IMR-90 (cell line): ENCODE measurements at regions of chr2 and their contacts with region 1.

Region 1: DNA sequence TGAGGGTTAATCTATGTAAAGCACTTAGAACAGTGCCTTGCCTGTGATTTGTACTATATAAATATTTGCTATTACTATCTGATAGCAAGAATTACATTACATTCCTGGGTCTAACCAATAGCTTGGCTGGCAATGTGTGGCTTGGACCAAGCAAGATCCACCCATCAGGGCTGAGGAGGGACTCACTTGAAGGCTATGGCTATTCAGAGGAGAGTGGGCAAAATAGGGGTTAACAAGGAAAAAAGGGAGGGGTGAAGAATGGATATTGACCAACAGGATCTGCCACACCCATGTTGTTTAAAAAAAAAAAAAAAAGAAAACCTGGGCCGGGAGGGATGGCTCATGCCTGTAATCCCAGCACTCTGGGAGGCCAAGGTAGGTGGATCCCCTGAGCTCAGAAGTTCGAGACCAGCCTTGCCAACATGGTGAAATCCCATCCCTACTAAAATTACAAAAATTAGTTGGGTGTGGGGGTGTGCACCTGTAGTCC is 20.0 kb upstream of the TMBIM1 start:
- DNase-seq: no peak
- ATAC-seq: peak; percentile 87
- H3K4me3 ChIP-seq: no peak overlapping the region
- H3K27ac ChIP-seq: no peak overlapping the region
- H3K4me1 ChIP-seq: peaks cover 8% of the 10 kb centered on the region
- H3K27me3 ChIP-seq: no peaks in the 10 kb centered on the region
- CTCF ChIP-seq: no peak
- POLR2A ChIP-seq: no peak
- RAD21 ChIP-seq: no peak

Region 2: DNA sequence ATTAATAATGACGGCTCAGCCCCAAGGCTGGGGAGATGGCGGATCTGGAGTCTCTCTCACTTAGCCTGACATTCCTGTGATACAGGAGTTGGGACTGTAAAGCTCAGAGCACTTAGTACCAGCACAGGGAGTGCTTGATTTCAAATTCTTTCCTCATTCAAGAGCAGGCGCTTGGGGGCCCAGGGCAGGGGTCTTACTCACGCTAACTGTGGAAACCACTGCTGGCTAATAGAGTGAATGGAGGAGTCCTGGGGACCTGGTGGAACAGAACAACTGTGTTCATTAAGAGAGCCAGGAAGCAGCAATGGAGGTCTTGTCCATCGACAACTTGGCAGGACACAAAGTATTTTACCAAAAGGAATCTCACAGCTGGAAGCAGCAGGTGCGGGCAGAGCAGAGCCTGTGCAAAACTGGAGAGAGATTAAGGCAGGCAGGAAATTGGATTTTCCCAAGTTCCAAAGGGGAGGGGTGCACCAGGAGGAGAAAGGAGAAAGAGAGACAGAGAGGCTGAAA is 668.5 kb before region 1 on chr2:
- CTCF ChIA-PET with region 1: no interaction called
- POLR2A ChIA-PET with region 1: no interaction called
- dilution Hi-C with region 1: no loop called
- in situ Hi-C with region 1: no loop called
- intact Hi-C with region 1: no loop called
- DNase-seq: no peak
- ATAC-seq: no peak
- H3K4me3 ChIP-seq: no peak overlapping the region
- H3K27ac ChIP-seq: no peak overlapping the region
- H3K4me1 ChIP-seq: no peaks in the 10 kb centered on the region
- H3K27me3 ChIP-seq: no peaks in the 10 kb centered on the region
- CTCF ChIP-seq: no peak
- POLR2A ChIP-seq: no peak
- RAD21 ChIP-seq: no peak

Region 3: DNA sequence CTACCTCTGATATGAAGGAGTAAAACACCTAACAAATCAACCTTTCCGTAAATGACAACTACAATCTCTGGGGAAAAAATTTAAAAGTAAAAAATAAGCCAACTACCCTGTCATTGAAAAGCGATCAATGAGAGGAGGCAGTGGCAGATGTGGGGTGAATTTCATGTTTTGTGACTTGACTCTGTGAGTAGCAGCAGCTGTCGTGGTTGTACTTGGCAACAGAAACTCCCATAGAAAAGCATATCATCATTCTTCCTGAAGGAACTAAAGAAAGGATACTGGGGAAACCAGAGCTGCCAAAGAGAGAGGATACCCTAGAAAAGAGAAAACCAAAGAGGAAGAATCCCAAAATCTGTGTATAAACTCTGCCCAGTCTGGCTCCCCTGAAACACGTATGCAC is 546.0 kb before region 1 on chr2:
- CTCF ChIA-PET with region 1: no interaction called
- POLR2A ChIA-PET with region 1: no interaction called
- dilution Hi-C with region 1: no loop called
- in situ Hi-C with region 1: no loop called
- intact Hi-C with region 1: no loop called
- DNase-seq: no peak
- ATAC-seq: no peak
- H3K4me3 ChIP-seq: no peak overlapping the region
- H3K27ac ChIP-seq: no peak overlapping the region
- H3K4me1 ChIP-seq: no peaks in the 10 kb centered on the region
- H3K27me3 ChIP-seq: no peaks in the 10 kb centered on the region
- CTCF ChIP-seq: no peak
- POLR2A ChIP-seq: no peak
- RAD21 ChIP-seq: no peak

Region 4: DNA sequence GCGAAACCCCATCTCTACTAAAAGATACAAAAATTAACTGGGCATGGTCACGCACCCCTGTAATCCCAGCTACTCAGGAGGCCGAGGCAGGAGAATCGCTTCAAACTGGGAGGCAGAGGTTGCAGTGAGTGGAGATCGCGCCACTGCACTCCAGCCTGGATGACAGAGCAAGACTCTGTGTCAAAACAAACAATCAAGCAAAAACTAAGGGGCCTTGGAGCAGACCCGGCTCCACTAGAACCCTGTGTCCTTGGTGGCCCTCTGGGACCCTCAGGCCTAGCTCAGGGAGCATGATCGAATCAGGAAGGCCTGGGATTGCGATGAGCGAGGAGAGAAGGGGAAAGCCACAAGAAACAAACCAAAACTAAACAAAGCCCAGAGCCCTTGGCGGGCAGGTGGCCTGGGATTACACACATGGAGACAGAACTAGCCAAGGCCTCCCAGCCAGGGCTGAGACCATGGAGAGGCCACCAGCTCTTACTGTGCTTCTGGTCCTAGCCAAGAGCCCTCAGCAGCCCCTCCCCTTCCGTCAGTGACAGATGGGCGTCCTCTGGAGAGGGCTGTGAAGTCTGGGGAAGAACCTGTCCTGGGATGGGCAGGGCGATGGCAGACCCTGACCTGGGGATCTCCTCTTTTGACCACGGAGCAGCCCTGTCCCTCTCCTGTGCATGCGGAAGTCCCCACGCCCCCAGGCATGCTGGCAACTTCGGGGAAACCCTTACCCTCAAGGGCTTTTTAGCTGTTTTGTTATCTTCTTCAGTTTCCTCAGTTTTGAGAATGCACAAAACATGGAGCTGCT is 16.9 kb after region 1 on chr2:
- CTCF ChIA-PET with region 1: no interaction called
- POLR2A ChIA-PET with region 1: no interaction called
- dilution Hi-C with region 1: no loop called
- in situ Hi-C with region 1: no loop called
- intact Hi-C with region 1: no loop called
- DNase-seq: no peak
- ATAC-seq: no peak
- H3K4me3 ChIP-seq: no peak overlapping the region
- H3K27ac ChIP-seq: no peak overlapping the region
- H3K4me1 ChIP-seq: peaks cover 9% of the 10 kb centered on the region
- H3K27me3 ChIP-seq: no peaks in the 10 kb centered on the region
- CTCF ChIP-seq: no peak
- POLR2A ChIP-seq: no peak
- RAD21 ChIP-seq: no peak

Region 5: GRCh38 chr2:218354850-218355443 is 42.6 kb after region 1 on chr2:
- CTCF ChIA-PET with region 1: interaction called, 4 read pairs
- POLR2A ChIA-PET with region 1: interaction called, 4 read pairs
- dilution Hi-C with region 1: no loop called
- in situ Hi-C with region 1: loop called (anchors 5 kb)
- intact Hi-C with region 1: no loop called
- DNase-seq: no peak
- ATAC-seq: no peak
- H3K4me3 ChIP-seq: no peak overlapping the region
- H3K27ac ChIP-seq: no peak overlapping the region
- H3K4me1 ChIP-seq: peaks cover 2% of the 10 kb centered on the region; the same call in 1 of the 2 replicates
- H3K27me3 ChIP-seq: 0 out of 2 replicates have a peak, but pooled peaks cover 2% of the 10 kb centered on the region
- CTCF ChIP-seq: no peak
- POLR2A ChIP-seq: no peak
- RAD21 ChIP-seq: no peak

Region 6: DNA sequence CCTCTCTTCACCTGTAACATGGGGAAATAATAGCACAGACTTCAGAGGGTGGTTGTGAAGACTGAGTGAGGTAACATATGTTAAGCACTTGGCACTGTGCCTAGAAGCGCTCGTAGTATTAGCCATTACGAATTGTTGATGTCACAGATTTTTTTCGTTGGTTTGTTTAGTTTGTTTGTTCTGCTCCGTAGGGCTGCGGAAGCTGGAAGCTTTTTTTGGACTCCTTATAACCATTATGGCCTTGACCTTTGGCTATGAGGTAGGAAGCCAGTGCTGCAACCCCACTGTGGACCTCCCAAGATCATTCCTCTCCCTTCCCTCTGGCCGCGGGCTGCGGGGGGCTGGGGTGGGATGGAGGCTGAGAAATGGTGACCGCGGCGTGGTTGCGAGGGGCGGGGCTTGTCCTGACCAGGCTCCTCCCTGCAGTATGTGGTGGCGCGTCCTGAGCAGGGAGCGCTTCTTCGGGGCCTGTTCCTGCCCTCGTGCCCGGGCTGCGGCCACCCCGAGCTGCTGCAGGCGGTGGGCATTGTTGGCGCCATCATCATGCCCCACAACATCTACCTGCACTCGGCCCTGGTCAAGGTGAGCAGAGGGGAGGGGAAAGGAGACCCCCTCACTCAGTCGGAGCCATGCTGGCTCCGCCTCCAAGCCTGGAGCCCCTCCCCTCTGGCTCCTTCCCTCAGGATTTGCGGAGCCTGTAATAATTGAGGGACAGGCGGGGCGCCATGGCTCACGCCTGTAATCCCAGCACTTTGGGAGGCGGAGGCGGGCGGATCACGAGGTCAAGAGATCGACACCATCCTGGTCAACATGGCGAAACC is 75.3 kb after region 1 on chr2:
- CTCF ChIA-PET with region 1: no interaction called
- POLR2A ChIA-PET with region 1: no interaction called
- dilution Hi-C with region 1: no loop called
- in situ Hi-C with region 1: loop called (anchors 5 kb)
- intact Hi-C with region 1: no loop called
- DNase-seq: peak; percentile 80
- ATAC-seq: peak; percentile 93
- H3K4me3 ChIP-seq: peak overlapping the region; percentile 42
- H3K27ac ChIP-seq: no peak overlapping the region
- H3K4me1 ChIP-seq: peaks cover 2% of the 10 kb centered on the region
- H3K27me3 ChIP-seq: peaks cover 4% of the 10 kb centered on the region
- CTCF ChIP-seq: no peak
- POLR2A ChIP-seq: no peak
- RAD21 ChIP-seq: no peak